ENCODE measurements at regions of chr7 and their contacts with region 1.

Region 1: GRCh38 chr7:106812027-106812643 is 52.9 kb upstream of the PIK3CG start:
- DNase-seq: peak in 1 of 4 experiments; percentile 32
- ATAC-seq: peak; percentile 15
- H3K4me3 ChIP-seq: no peak overlapping the region
- H3K27ac ChIP-seq: no peak overlapping the region
- H3K4me1 ChIP-seq: peaks cover 0 to 44% of the 10 kb centered on the region in 2 experiments; a peak in 4 of 5 replicates
- H3K27me3 ChIP-seq: no peaks in the 10 kb centered on the region
- CTCF ChIP-seq: no peak
- EP300 ChIP-seq: no peak
- POLR2A ChIP-seq: no peak
- RAD21 ChIP-seq: no peak

Region 2: DNA sequence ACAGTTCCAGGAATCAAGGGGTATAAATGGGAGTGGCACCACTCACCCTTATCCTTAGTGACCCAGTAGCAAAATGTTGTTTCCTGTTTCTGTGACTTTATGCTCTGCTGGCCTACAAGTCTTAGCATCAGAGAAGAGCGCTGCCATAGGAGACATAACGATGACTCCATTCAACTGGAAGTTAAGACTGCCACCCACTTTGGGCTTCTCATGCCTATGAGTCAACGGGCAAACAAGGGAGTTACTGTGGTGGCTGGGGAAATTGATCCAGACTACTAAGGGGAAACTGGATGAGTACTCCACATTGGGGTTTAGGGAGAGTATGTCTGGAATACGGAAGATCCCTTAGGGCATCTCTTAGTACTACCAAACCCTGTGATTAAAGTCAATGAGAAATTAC is 12.3 kb after region 1 on chr7:
- CTCF ChIA-PET with region 1: interaction called, 3 read pairs
- POLR2A ChIA-PET with region 1: interaction called, 16 read pairs
- in situ Hi-C with region 1: no loop called
- intact Hi-C with region 1: no loop called
- DNase-seq: no peak
- ATAC-seq: no peak
- H3K4me3 ChIP-seq: no peak overlapping the region
- H3K27ac ChIP-seq: no peak overlapping the region
- H3K4me1 ChIP-seq: no peaks in the 10 kb centered on the region
- H3K27me3 ChIP-seq: no peaks in the 10 kb centered on the region
- CTCF ChIP-seq: no peak
- EP300 ChIP-seq: no peak
- POLR2A ChIP-seq: no peak
- RAD21 ChIP-seq: no peak

Region 3: GRCh38 chr7:106858618-106859532 is 46.7 kb after region 1 on chr7:
- CTCF ChIA-PET with region 1: no interaction called
- POLR2A ChIA-PET with region 1: interaction called, 7 read pairs
- in situ Hi-C with region 1: no loop called
- intact Hi-C with region 1: loop called (anchors 2 kb)
- DNase-seq: peak; percentile 88 to 99 (median 92)
- ATAC-seq: peak; percentile 72
- H3K4me3 ChIP-seq: no peak overlapping the region
- H3K27ac ChIP-seq: peak overlapping the region; percentile 57
- H3K4me1 ChIP-seq: peaks cover 27 to 49% of the 10 kb centered on the region in 2 experiments
- H3K27me3 ChIP-seq: no peaks in the 10 kb centered on the region
- CTCF ChIP-seq: no peak
- EP300 ChIP-seq: peak; percentile 79
- POLR2A ChIP-seq: no peak
- RAD21 ChIP-seq: peak in 1 of 2 experiments; percentile 15; a peak in 1 of 4 replicates

Region 4: DNA sequence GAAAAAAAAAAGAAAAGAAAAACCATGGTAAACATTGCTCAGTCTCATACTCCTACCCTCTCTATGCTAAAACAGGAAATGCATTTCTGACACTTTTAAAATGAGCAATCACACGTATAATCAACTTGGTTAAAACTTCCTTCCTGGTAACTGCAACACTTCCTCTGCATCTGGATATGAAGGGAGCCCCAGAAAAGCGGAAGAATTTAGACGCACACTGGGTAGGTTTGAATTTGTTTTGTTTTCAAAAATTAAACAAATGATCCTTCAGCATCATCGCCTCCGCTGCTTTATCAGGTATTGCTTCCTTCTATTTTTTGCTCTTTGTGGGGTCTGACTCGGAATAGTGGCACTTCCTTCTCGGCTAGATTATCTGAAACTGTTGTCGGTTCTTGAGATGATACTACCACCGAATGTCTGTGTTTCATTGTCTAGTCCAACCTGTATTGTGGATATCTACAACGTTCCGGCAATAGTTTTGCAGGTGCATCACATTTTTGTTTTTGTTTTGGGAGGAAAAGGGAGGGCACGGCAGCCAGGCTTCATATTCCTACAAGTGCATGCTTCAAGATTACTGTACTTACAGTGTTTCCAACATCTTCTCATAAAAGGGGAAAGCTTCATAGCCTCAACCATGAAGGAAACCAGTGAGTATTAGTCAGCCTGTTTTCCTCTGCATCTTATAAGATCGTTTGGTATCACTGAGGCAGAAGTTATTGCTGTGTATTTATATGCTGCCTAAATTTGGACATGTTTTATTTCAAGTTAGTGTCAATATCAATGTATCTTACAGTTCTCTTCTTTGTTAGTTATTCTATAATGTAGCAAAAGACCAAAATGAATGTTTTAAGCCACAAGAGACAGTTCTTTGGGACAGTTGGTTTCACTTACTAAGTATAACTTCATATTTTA is 53.3 kb after region 1 on chr7 and contains the start of gene PIK3CG:
- CTCF ChIA-PET with region 1: no interaction called
- POLR2A ChIA-PET with region 1: interaction called, 4 read pairs
- in situ Hi-C with region 1: no loop called
- intact Hi-C with region 1: loop called (anchors 2 kb)
- DNase-seq: peak in 2 of 4 experiments; percentile 65 to 67
- ATAC-seq: peak; percentile 52
- H3K4me3 ChIP-seq: peak within 1 kb of the TSS; percentile 48
- H3K27ac ChIP-seq: peak within 1 kb of the TSS; percentile 79
- H3K4me1 ChIP-seq: peaks cover 15 to 53% of the 10 kb centered on the region in 2 experiments
- H3K27me3 ChIP-seq: no peaks in the 10 kb centered on the region
- CTCF ChIP-seq: no peak; a peak in 1 of 6 replicates
- EP300 ChIP-seq: peak; percentile 54
- POLR2A ChIP-seq: peak; percentile 74
- RAD21 ChIP-seq: no peak
- polyA plus RNA-seq, gene PIK3CG: 5.3 to 6.2 TPM

Region 5: GRCh38 chr7:107480932-107481331 is 668.8 kb after region 1 on chr7:
- CTCF ChIA-PET with region 1: no interaction called
- POLR2A ChIA-PET with region 1: no interaction called
- in situ Hi-C with region 1: no loop called
- intact Hi-C with region 1: no loop called
- DNase-seq: peak in 3 of 4 experiments; percentile 20 to 47 (median 37)
- ATAC-seq: peak; percentile 84
- H3K4me3 ChIP-seq: no peak overlapping the region
- H3K27ac ChIP-seq: no peak overlapping the region; the same call in 2 of the 3 replicates
- H3K4me1 ChIP-seq: peaks cover 0 to 8% of the 10 kb centered on the region in 2 experiments; a peak in 2 of 5 replicates
- H3K27me3 ChIP-seq: no peaks in the 10 kb centered on the region
- CTCF ChIP-seq: no peak
- EP300 ChIP-seq: peak; percentile 69
- POLR2A ChIP-seq: no peak
- RAD21 ChIP-seq: no peak

Measured in K562 (cell line).